ENCODE measurements at regions of chr11 and their contacts with region 1.

Region 1: GRCh38 chr11:27183672-27184457 is 143.2 kb downstream of the BBOX1 start:
- DNase-seq: peak; percentile 50 to 74 (median 70)
- H3K4me3 ChIP-seq: no peak overlapping the region
- H3K27ac ChIP-seq: no peak overlapping the region
- H3K4me1 ChIP-seq: no peaks in the 10 kb centered on the region
- H3K27me3 ChIP-seq: peaks cover 0 to 14% (median 12%) of the 10 kb centered on the region in 5 experiments

Region 2: GRCh38 chr11:27497284-27497866 is 313.5 kb after region 1 on chr11:
- CTCF ChIA-PET with region 1: interaction called, 11 read pairs
- POLR2A ChIA-PET with region 1: no interaction called
- DNase-seq: peak; percentile 25 to 59 (median 55)
- H3K4me3 ChIP-seq: no peak overlapping the region
- H3K27ac ChIP-seq: no peak overlapping the region
- H3K4me1 ChIP-seq: peaks cover 0 to 2% (median 0%) of the 10 kb centered on the region in 4 experiments
- H3K27me3 ChIP-seq: no peaks in the 10 kb centered on the region